PC-3 (cell line): ENCODE measurements at regions of chr22 and their contacts with region 1.

Region 1: DNA sequence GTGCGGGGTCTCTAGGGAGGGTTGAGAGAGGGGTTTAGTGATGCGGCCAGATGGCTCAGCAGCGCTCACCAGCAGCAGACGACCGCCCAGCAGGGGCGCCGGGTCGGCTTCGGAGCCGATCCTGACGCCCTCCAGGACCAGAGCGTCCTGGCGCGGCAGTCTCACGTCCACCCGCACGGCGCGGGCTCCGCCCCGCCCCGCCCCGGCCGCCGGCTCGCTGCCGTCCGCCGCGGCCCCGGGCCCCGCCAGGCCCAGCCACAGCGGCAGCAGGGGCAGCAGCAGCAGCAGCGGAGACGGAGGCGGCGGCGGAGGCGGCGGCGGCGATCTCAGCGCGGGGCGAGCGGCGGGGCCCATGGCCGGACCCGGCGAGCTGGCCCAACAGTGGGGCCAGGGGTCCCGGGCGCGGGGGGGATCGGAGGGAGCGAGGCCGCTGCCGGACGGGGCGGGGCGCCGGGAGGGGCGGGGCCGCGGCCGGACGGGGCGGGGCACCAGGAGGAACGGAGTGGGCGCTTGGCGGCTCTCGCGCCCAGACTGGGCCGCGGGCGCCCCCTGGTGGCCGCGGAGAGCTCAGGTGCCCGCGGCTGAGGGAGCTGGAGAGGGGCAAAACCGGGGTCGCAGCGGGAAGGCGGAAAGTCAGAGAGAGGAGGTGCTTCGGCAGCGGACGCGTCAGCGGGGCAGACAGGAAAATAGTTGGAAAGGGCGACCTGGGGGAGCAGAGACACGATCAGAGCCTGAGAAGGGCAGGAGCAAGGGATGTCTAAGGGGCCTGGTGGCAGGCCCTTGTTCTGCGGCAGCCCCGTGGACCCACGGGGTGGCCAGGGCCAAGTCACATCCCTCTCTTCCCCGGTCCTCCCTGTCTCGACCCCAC is at the start of gene RNF215:
- DNase-seq: peak; percentile 80
- ATAC-seq: peak; percentile 89
- H3K4me3 ChIP-seq: peak within 1 kb of the TSS; percentile 76
- H3K27ac ChIP-seq: no peak within 1 kb of the TSS
- H3K4me1 ChIP-seq: peaks cover 8% of the 10 kb centered on the region; the same call in 1 of the 2 replicates
- H3K27me3 ChIP-seq: no peaks in the 10 kb centered on the region
- CTCF ChIP-seq: peak; percentile 71
- total RNA-seq, gene RNF215: 22.6 and 25.2 TPM in 2 replicates

Region 2: DNA sequence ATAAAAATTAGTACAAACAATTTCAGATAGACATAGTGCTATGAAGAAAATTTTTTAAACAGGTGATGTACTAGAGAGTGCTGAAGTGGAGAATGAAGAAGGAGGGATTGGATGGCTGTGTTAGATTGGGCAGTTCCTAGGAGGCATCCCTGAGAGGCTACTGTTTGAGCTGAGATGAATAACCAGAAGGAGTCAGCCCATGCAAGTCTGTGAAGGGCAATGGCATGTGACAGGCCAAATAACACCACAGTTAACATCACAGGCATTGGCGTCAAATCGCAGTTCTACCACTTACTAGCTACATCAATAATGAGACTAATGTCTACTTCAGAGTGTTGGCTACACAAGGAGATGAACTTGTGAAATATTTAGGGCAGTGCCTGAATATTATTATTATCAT is 271.5 kb before region 1 on chr22:
- CTCF ChIA-PET with region 1: no interaction called
- POLR2A ChIA-PET with region 1: no interaction called
- intact Hi-C with region 1: no loop called
- DNase-seq: peak; percentile 2
- ATAC-seq: peak; percentile 22; the same call in 1 of the 2 replicates
- H3K4me3 ChIP-seq: no peak overlapping the region
- H3K27ac ChIP-seq: peak overlapping the region; percentile 47
- H3K4me1 ChIP-seq: peaks cover 11% of the 10 kb centered on the region
- H3K27me3 ChIP-seq: no peaks in the 10 kb centered on the region
- CTCF ChIP-seq: no peak

Region 3: DNA sequence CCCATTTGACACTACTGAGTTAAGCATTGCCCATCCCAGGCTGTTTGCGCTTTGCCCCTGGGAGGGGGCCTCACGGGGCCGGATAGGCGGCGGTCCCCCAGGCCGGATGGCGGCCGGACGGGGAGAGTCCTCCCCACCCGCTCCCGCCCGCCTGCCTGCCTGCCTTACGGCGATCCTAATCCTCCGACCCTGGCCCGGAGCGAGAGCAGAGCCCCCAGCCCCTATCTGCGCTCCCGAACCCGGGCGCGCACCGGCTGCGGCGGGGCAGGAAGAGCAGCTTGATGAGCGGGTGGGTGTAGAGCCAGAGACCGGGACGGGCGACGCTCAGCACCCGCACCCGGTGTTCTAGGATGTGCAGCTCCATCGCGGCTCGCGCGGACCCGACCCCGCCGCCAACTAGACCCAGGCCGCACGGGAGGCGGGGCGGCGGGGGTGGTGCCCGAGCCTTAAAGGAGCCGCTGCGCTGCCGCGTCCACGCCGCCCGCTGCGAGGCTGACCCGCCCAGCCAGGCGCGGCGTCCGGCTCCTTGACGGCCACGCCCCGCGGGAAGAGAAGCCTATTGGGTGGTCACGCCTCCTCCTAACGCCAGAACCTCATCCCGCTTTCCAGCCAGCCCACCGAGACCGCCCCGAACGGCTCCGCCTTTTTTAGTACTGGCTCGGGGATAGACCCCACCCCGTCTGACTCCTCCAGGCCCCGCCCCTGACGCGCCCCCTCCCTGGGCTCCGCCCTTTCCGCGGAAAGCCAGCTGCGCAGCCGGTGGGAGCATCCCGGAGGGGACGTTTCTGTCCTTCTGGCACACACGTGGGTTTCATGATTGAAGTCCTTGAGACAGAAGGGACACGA is 97.8 kb before region 1 on chr22 and contains the start of gene CASTOR1:
- CTCF ChIA-PET with region 1: interaction called, 21 read pairs
- POLR2A ChIA-PET with region 1: no interaction called
- intact Hi-C with region 1: no loop called
- DNase-seq: peak; percentile 95
- ATAC-seq: peak; percentile 77
- H3K4me3 ChIP-seq: peak within 1 kb of the TSS; percentile 79
- H3K27ac ChIP-seq: peak within 1 kb of the TSS; percentile 37; the same call in 1 of the 2 replicates
- H3K4me1 ChIP-seq: peaks cover 25% of the 10 kb centered on the region
- H3K27me3 ChIP-seq: no peaks in the 10 kb centered on the region
- CTCF ChIP-seq: no peak
- total RNA-seq, gene CASTOR1: 4.2 and 6.1 TPM in 2 replicates

Region 4: DNA sequence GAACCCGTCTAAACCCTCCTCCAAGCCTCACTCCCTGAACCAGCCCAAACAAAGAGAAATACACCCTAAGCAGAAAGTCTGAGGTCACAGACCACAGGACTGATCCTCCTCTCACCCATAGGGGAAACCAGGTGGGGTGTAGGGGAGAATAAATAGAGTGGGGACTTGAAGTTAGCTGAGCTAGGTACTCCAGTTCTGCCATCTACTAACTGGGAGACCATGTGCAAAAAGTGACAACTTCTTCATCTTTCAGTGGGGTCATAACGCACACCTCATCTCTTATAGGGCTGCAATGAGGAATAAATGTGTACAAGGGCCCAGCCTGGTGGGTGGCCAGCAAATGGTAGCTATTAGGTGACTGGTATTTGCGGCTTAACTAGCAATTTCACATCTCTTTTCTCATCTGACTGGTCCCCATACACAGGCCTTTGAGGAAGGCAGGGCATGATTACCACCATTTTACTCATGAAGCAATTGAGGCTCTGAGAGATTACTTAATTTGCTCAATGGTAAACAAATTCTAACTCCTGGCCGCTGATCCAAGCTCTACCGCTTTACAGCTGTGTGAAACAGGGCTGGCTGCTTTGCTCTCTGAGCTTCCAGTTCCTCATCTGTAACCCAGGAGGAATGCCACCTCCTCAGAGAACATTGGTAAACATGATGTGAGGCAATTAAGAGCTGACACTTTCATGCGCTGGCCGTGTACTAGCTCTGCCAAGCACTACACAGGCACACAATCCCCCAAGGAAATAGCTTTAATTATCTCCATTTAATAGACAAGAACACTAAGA is 77.0 kb before region 1 on chr22:
- CTCF ChIA-PET with region 1: no interaction called
- POLR2A ChIA-PET with region 1: no interaction called
- intact Hi-C with region 1: no loop called
- DNase-seq: no peak
- ATAC-seq: no peak
- H3K4me3 ChIP-seq: no peak overlapping the region
- H3K27ac ChIP-seq: no peak overlapping the region
- H3K4me1 ChIP-seq: peaks cover 74% of the 10 kb centered on the region
- H3K27me3 ChIP-seq: no peaks in the 10 kb centered on the region
- CTCF ChIP-seq: no peak

Region 5: GRCh38 chr22:30340911-30341685 is 46.1 kb before region 1 on chr22:
- CTCF ChIA-PET with region 1: no interaction called
- POLR2A ChIA-PET with region 1: no interaction called
- intact Hi-C with region 1: no loop called
- DNase-seq: no peak
- ATAC-seq: no peak
- H3K4me3 ChIP-seq: no peak overlapping the region
- H3K27ac ChIP-seq: no peak overlapping the region
- H3K4me1 ChIP-seq: no peaks in the 10 kb centered on the region
- H3K27me3 ChIP-seq: no peaks in the 10 kb centered on the region
- CTCF ChIP-seq: no peak

Region 6: DNA sequence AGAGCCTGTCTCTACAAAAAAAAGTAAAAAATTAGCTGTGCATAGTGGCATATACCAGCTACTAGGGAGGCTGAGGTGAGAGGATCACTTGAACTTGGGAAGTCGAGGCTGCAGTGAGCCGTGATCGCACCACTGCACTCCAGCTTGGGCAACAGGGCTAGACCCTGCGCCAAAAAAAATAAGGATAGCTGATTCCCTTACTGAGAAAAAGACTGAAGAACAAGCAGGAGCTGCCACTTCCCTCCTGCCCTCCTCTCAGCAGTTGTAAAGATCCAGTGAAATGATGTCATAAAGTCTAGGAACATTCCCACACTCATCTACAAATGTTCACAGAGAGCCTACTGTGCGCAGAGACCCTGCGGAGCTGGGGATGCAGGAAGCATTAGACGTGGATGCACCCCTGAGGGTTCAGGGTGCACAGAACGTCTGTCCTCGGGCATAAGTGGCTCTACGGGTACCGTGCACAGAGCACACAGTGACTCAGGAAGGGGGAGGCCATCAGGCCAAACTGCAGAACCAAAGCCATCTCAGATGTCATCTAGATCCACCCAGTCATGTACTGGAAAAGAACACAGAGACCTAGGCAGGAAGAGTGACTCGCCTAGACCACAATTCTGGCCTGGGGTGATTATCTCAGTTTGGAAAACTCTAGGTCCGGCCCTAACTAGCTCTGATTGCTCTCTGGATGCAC is 21.4 kb after region 1 on chr22:
- CTCF ChIA-PET with region 1: no interaction called
- POLR2A ChIA-PET with region 1: no interaction called
- intact Hi-C with region 1: no loop called
- DNase-seq: peak; percentile 87
- ATAC-seq: peak; percentile 97
- H3K4me3 ChIP-seq: no peak overlapping the region
- H3K27ac ChIP-seq: peak overlapping the region; percentile 78
- H3K4me1 ChIP-seq: peaks cover 18% of the 10 kb centered on the region
- H3K27me3 ChIP-seq: no peaks in the 10 kb centered on the region
- CTCF ChIP-seq: no peak

Region 7: GRCh38 chr22:30426395-30427353 is 39.5 kb after region 1 on chr22:
- CTCF ChIA-PET with region 1: interaction called, 6 read pairs
- POLR2A ChIA-PET with region 1: no interaction called
- intact Hi-C with region 1: loop called (anchors 1 kb)
- DNase-seq: peak; percentile 89
- ATAC-seq: peak; percentile 9
- H3K4me3 ChIP-seq: peak overlapping the region; percentile 71
- H3K27ac ChIP-seq: peak overlapping the region; percentile 95
- H3K4me1 ChIP-seq: peaks cover 38% of the 10 kb centered on the region
- H3K27me3 ChIP-seq: no peaks in the 10 kb centered on the region
- CTCF ChIP-seq: peak; percentile 70

Region 8: DNA sequence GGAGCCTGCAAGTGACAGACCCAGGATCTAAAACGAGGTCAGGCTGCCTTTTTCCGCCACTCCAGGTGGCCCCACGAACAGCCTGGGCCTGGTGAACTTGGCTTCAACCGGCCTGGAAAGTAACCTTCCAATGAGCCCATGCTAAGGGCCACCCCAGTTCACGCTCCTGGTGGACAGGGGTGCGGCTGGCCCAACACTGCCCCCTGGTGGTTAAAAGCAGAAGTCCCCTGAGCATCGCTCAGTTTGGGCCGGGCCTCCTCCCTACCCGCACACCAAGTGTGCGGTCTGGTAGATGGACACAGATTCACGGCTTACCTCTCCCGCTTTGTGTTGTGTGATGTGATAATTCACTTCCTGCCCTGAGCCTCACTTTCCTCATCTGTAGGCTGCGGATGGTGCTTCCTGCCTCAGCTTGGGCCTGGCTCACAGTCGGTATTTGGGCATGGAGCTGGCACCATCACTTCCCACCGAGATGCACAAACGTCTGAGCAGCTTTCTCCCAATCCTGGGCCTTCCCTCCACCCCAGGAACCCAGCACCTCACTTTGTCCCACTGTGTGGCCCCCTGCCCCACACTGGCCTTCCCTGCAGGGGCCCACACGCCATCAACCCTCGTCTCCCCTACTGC is 98.3 kb after region 1 on chr22:
- CTCF ChIA-PET with region 1: no interaction called
- POLR2A ChIA-PET with region 1: no interaction called
- intact Hi-C with region 1: loop called (anchors 1 kb)
- DNase-seq: peak; percentile 59
- ATAC-seq: peak; percentile 95
- H3K4me3 ChIP-seq: no peak overlapping the region
- H3K27ac ChIP-seq: no peak overlapping the region
- H3K4me1 ChIP-seq: no peaks in the 10 kb centered on the region
- H3K27me3 ChIP-seq: no peaks in the 10 kb centered on the region
- CTCF ChIP-seq: peak; percentile 84